ENCODE measurements at regions of chr3 and their contacts with region 1.

Region 1: DNA sequence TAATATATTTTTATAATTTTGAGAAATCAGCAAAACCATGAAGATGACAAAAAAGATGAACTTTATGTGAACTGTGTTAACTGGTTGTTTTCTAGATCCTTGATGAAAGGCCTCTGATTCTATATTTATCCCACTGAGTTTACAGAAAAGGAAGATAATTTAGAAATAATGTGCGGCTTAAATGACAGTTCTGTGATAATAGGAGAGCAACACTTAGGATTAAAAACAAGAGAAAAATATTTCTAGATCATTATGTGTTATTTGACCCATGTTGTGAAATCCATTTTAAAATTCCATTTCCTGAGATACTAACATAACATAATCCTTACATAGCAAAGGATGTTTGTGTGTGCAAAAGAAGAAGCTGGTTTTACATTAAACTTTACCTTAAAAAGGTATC is 598.0 kb downstream of the DIPK2A start:
- DNase-seq: no peak
- ATAC-seq: no peak
- H3K4me3 ChIP-seq: no peak overlapping the region
- H3K27ac ChIP-seq: no peak overlapping the region
- H3K4me1 ChIP-seq: no peaks in the 10 kb centered on the region
- H3K27me3 ChIP-seq: no peaks in the 10 kb centered on the region
- CTCF ChIP-seq: no peak
- POLR2A ChIP-seq: no peak

Region 2: GRCh38 chr3:144499001-144499745 is 70.5 kb before region 1 on chr3:
- intact Hi-C with region 1: loop called in 1 of 10 experiments (anchors 5 kb)
- DNase-seq: no peak
- ATAC-seq: no peak
- H3K4me3 ChIP-seq: no peak overlapping the region
- H3K27ac ChIP-seq: no peak overlapping the region
- H3K4me1 ChIP-seq: no peaks in the 10 kb centered on the region
- H3K27me3 ChIP-seq: no peaks in the 10 kb centered on the region
- CTCF ChIP-seq: no peak
- POLR2A ChIP-seq: no peak

Region 3: DNA sequence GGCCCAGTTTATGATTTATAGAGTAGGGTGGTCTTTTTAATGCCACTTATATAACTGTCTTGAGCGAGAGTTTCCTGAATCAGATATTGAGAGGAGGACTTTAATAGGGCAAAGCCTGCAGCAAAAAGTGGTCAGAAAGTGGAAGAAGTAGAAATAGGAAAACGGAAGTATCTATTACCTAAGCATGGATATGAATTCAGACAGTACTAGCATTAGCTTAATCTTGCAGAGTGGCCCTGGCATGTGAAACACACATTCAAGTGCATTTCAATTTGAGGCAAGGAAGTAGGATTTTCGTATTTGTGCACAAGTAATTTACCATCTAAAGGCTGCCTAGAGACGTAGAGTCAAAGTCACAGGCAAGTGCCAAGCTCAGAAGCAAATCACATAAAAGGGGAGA is 24.2 kb after region 1 on chr3:
- intact Hi-C with region 1: loop called in 1 of 10 experiments (anchors 2 kb)
- DNase-seq: no peak
- ATAC-seq: no peak
- H3K4me3 ChIP-seq: no peak overlapping the region
- H3K27ac ChIP-seq: no peak overlapping the region
- H3K4me1 ChIP-seq: no peaks in the 10 kb centered on the region
- H3K27me3 ChIP-seq: no peaks in the 10 kb centered on the region
- CTCF ChIP-seq: no peak
- POLR2A ChIP-seq: no peak

Measured in heart left ventricle (tissue), 16 donors.